ENCODE measurements at regions of chr4 and their contacts with region 1.

Region 1: DNA sequence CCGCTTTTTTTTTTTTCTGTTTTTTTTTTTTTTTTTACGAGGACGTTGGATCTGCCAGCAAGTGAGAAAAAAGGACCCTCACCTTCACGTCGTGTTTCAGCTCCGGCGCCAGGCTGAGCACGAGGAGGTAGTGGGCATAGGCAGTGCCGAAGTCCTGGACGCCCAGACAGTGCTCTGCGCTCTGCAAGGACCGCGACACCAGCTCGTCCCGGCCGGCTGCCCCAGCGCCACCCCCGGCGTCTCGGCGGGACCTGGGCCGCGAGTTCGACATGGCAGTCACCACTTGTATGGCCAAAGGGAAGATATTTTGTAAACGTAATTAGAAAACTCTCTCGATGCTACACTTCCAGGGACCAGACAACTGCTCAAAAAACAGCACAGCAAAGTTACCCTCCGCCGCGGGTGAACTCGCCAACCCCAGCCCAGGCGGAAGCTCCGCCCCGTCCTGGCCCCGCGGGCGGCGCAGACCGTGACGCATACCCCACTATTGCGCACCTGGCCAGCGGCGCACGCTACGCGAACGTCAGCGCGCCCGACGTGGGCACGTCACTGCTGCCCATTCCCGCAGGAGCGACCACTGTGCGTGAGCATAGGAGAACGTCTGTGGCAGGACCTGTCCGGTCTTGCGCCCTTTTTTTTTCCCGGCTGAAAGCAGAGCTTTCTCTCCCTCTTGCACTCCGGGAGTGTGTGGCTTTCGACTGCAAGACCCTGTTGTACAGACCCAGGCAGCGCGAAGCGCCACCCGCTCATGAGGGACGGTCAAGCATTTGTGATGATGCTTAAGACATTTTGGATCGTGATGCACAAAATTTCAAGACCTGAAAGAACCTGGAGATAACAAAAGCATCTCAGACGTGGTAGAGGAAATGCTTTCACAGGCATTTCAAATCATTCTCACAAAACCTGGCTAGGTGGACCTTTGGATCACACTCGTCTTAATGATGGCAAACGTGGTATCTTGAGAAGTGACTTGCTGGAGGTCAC is at the start of gene PRMT9:
- DNase-seq: peak; percentile 93
- H3K4me3 ChIP-seq: peak within 1 kb of the TSS; percentile 47 to 85 (median 80)
- H3K27ac ChIP-seq: peak within 1 kb of the TSS; percentile 78
- H3K4me1 ChIP-seq: peaks cover 15% of the 10 kb centered on the region
- H3K27me3 ChIP-seq: no peaks in the 10 kb centered on the region
- CTCF ChIP-seq: no peak
- POLR2A ChIP-seq: peak; percentile 99
- total RNA-seq, gene PRMT9: 8.2 and 9.0 TPM in 2 replicates

Region 2: DNA sequence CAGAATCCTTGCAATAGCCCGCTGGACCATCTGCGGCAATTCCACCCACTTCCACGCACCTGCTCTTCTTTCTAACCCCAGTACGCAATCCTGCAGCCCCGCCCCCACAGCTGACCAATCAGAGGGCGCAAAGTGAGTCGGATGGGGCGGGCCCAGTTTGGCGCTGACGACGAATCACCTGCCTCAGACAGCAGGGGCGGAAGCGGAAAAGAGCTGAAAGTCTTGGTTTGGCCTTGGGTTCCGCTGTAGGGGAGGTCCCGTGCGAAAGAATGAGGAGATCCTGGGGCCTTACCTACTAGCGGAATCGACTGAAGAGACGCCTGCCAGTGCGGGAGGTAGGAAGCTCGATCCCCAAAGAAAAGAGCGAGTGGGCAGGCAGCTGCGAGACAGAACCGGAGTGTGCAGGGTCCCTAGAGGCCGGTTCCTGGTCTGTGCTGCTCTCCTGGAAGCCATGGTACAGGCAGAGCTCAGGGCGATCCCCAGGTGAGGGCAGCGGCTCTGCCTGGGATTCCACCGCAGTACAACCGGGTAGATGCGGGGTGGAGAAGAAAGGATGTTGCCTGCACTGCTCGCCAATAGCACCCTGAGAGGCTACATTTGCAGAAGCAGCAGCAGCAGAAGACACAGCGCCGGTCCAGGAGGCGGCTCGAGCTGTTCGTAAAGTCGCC is 66.7 kb before region 1 on chr4 and contains the start of gene TMEM184C:
- CTCF ChIA-PET with region 1: interaction called, 4 read pairs
- POLR2A ChIA-PET with region 1: interaction called, 5 read pairs
- dilution Hi-C with region 1: no loop called
- intact Hi-C with region 1: loop called (anchors 1 kb)
- DNase-seq: peak; percentile 96
- H3K4me3 ChIP-seq: peak within 1 kb of the TSS; percentile 30 to 93 (median 90)
- H3K27ac ChIP-seq: peak within 1 kb of the TSS; percentile 48
- H3K4me1 ChIP-seq: peaks cover 9% of the 10 kb centered on the region
- H3K27me3 ChIP-seq: peaks cover 8 to 12% of the 10 kb centered on the region in 2 experiments
- CTCF ChIP-seq: peak in 1 of 2 donors; percentile 16
- POLR2A ChIP-seq: peak; percentile 84
- total RNA-seq, gene TMEM184C: 27.1 and 29.2 TPM in 2 replicates